Activated naive CD8-positive, alpha-beta T cell treated with anti-CD3 and anti-CD28 coated beads, Interleukin-2, amount 10 ng/mL, durations not matched to agents 7 days and 5 days (primary cell): ENCODE measurements at regions of chrX and their contacts with region 1.

Region 1: DNA sequence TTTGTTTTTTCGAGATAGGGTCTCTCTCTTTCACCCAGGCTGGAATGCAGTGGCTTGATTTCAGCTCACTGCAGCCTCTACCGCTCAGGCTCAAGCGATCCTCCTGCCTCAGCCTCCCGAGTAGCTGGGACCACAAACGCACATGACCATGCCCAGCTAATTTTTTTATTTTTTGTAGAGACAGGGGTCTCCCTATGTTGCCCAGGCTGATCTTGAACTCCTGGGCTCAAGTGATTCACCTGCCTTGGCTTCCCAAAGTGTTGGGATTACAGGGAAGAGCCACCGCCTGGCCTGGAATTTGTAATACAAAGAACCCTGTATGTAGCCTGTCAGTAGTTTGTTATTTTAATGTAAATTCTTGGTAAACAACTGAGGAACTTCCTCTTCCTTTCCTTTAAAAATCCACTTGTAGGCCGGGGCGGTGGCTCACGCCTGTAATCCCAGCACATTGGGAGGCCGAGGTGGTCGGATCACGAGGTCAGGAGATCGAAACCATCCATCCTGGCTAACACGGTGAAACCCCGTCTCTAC is 119.5 kb downstream of the PHKA2 start:
- DNase-seq: no peak
- ATAC-seq: no peak
- H3K4me3 Mint-ChIP-seq: no peak overlapping the region
- H3K27ac Mint-ChIP-seq: no peak overlapping the region
- H3K4me1 Mint-ChIP-seq: no peaks in the 10 kb centered on the region
- H3K27me3 Mint-ChIP-seq: no peaks in the 10 kb centered on the region

Region 2: DNA sequence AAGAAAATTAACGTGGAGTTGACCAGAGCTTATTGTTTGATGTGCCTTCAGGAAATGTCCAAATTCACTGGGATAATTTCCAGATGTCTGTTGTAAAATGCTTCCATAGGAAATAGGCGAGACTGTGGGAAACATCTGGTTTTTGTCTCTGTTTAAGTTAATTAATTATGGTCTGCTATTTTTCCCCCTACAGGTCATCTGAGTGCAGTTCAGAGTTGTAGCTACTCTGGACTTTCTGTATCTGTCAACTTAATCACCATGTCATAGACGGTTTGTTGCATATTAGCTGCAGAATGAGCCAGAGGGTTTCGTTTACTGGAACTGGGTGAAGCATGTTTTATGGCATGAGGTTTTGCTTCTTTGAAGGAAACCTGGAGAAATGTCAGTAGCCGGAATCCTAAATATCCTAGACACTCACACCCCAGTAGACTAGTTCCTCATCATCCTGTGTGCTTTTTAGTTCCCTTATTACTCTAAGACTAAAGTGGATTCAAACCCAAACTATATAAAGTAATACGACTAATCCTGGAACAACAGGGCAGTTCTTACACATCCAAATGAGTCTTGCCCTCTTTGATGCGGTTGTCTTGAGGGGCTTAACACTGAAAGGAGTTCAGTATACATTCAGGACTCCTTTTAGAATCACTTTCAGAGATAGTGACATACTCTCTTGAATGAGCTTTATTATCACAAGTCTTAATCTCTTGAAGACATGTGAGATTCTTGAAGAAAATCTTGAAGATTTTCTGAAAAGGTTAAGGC is 94.5 kb before region 1 on chrX:
- POLR2A ChIA-PET with region 1: no interaction called
- DNase-seq: no peak
- ATAC-seq: no peak
- H3K4me3 Mint-ChIP-seq: no peak overlapping the region
- H3K27ac Mint-ChIP-seq: no peak overlapping the region
- H3K4me1 Mint-ChIP-seq: no peaks in the 10 kb centered on the region
- H3K27me3 Mint-ChIP-seq: no peaks in the 10 kb centered on the region

Region 3: GRCh38 chrX:18833071-18833731 is 31.3 kb before region 1 on chrX:
- POLR2A ChIA-PET with region 1: interaction called, 10 read pairs
- DNase-seq: no peak
- ATAC-seq: no peak
- H3K4me3 Mint-ChIP-seq: no peak overlapping the region
- H3K27ac Mint-ChIP-seq: no peak overlapping the region
- H3K4me1 Mint-ChIP-seq: peaks cover 2% of the 10 kb centered on the region
- H3K27me3 Mint-ChIP-seq: no peaks in the 10 kb centered on the region

Region 4: DNA sequence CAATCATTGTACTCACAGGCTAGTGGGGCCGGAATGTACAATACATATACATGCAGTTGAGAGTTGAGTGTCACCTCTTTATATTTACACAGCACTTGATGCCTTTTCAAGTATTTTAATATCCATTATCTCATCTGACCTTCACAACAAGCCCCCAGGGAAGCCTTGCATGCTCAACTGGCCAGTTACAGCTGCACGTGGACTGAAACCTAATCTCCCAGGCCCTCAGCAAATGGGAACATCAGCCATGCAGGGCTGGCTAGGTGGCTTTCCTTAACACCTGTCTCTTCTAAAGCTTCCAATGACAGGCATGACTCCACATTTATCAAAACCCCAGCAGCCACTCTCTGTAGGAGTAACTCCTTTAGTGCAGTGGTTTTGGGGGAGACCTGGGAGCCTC is 63.1 kb after region 1 on chrX:
- POLR2A ChIA-PET with region 1: no interaction called
- DNase-seq: no peak
- ATAC-seq: no peak
- H3K4me3 Mint-ChIP-seq: no peak overlapping the region
- H3K27ac Mint-ChIP-seq: no peak overlapping the region
- H3K4me1 Mint-ChIP-seq: no peaks in the 10 kb centered on the region
- H3K27me3 Mint-ChIP-seq: no peaks in the 10 kb centered on the region

Region 5: GRCh38 chrX:19212037-19212436 is 347.6 kb after region 1 on chrX:
- POLR2A ChIA-PET with region 1: no interaction called
- DNase-seq: no peak
- ATAC-seq: no peak
- H3K4me3 Mint-ChIP-seq: no peak overlapping the region
- H3K27ac Mint-ChIP-seq: no peak overlapping the region
- H3K4me1 Mint-ChIP-seq: peaks cover 6% of the 10 kb centered on the region
- H3K27me3 Mint-ChIP-seq: peaks cover 16% of the 10 kb centered on the region